ENCODE measurements at regions of chr1 and their contacts with region 1.

Region 1: DNA sequence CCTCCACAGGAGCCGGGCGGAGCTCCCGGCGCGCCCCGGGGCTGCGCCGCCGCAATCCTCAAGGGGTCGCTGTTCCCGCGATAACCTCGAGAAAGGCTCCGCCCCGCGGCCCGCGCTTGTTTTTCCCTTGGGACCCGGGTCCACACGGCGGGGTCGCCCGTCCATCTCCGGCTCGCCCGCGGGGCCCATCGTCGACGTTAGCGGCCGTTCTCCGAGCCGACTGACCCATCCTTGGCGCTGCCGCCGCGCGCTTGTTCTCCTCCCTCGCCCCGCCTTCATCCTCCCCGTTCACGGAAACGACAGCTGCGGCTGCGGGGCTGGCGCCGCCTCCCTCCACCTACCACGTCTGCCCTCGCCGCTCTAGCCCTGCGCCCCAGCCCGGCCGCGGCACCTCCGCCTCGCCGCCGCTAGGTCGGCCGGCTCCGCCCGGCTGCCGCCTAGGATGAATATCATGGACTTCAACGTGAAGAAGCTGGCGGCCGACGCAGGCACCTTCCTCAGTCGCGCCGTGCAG is at the start of gene SH3GLB1:
- DNase-seq: peak; percentile 93
- H3K4me3 ChIP-seq: peak within 1 kb of the TSS; percentile 82
- H3K27ac ChIP-seq: peak within 1 kb of the TSS; percentile 89
- H3K4me1 ChIP-seq: peaks cover 30% of the 10 kb centered on the region
- CTCF ChIP-seq: peak; percentile 90
- total RNA-seq, gene SH3GLB1: 17.7 and 18.9 TPM in 2 replicates

Region 2: GRCh38 chr1:86380257-86380861 is 324.2 kb before region 1 on chr1:
- CTCF ChIA-PET with region 1: no interaction called
- POLR2A ChIA-PET with region 1: no interaction called
- intact Hi-C with region 1: loop called (anchors 5 kb)
- DNase-seq: peak; percentile 69
- H3K4me3 ChIP-seq: no peak overlapping the region
- H3K27ac ChIP-seq: no peak overlapping the region
- H3K4me1 ChIP-seq: no peaks in the 10 kb centered on the region
- CTCF ChIP-seq: peak; percentile 95

Region 3: DNA sequence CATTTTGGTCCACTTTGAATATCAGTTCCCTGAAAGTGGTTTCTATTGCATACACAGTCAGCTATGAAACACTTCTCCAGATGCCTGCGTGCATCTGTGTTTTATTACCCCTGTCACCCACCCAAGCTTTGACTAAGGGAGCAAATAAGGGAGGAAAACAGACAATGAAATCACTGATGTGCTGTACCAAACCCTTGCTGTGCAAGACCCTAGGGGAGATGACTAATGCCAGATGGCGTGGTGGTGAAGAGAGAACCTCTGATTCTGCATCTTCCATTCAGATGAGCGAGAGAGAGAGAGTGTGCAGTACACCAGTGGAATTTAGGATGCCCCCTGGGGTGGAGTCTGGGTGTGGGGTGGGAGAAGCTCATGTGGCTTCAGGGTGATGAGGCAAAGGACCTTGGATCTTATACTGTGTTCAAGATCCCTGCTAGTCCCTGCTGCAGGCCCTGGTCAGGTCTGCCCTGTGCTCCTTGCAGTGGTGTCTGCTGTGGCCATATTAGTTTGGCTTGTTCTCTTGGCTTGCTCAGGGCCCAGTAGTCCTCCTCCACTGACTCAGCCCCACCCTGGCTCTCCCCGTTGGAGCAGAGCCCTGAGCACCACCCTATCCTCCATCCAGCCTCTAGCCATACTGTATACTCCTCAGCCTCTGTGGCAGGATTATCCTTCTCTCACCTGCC is 217.2 kb before region 1 on chr1:
- CTCF ChIA-PET with region 1: no interaction called
- POLR2A ChIA-PET with region 1: no interaction called
- intact Hi-C with region 1: no loop called
- DNase-seq: no peak
- H3K4me3 ChIP-seq: no peak overlapping the region
- H3K27ac ChIP-seq: no peak overlapping the region
- H3K4me1 ChIP-seq: no peaks in the 10 kb centered on the region
- CTCF ChIP-seq: no peak

Region 4: DNA sequence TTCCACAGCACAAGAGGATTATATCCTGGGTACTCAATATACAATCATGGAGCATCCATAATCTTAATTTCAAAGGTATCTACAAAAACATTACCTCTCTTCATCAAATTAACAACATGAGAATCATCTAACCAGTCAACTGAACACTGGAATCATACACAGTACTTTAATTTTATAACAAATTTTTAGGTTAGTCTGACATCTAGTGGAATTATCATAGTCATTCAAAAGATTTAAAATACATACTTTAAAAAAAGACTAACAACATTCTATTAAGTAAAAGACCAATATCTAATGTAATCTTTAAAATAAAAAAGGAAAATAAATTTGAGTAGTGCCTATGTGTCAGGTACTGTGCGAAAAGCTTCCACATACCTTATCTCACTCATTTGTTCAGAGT is 16.9 kb before region 1 on chr1:
- CTCF ChIA-PET with region 1: no interaction called
- POLR2A ChIA-PET with region 1: no interaction called
- intact Hi-C with region 1: no loop called
- DNase-seq: peak; percentile 25
- H3K4me3 ChIP-seq: no peak overlapping the region
- H3K27ac ChIP-seq: no peak overlapping the region
- H3K4me1 ChIP-seq: no peaks in the 10 kb centered on the region
- CTCF ChIP-seq: peak; percentile 72

Region 5: GRCh38 chr1:86733340-86733739 is 28.8 kb after region 1 on chr1:
- CTCF ChIA-PET with region 1: interaction called, 3 read pairs
- POLR2A ChIA-PET with region 1: interaction called, 11 read pairs
- intact Hi-C with region 1: no loop called
- DNase-seq: no peak
- H3K4me3 ChIP-seq: no peak overlapping the region
- H3K27ac ChIP-seq: no peak overlapping the region
- H3K4me1 ChIP-seq: no peaks in the 10 kb centered on the region
- CTCF ChIP-seq: no peak

Region 6: DNA sequence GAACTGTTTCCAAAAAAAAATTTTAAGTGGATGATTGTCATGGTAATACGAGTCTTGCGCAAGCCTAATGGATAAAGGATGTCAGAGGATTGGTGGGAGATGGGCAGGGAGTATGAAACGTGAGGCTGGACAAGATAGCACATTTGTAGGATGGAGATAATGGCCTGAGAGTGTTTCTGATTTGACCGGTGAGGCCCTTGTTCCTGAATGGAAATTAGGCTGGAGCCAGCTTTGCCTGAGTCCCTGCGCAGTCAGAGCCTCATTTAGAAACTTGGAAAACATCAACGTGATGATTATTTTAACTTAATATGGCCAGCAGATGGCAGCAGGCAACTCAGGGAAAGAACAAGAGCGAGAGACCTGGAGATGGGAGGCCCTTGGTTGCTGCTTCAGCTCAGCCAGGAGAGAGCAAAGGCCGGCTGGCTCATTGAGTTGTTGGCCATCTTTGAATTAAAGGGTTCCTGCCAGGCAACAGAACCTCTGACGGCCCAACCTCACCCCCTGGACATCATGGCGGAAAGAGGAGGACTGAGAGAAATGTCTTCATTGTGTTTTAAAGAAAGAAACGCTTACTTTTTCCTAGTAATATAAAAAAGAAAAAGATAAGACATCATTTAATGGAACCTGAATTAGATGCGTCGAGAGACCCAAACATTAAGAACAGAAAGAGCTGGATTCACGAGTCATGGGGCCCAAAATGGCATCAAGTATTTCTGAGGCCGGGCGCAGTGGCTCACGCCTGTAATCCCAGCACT is 129.1 kb after region 1 on chr1:
- CTCF ChIA-PET with region 1: no interaction called
- POLR2A ChIA-PET with region 1: interaction called, 5 read pairs
- intact Hi-C with region 1: loop called (anchors 1 kb)
- DNase-seq: peak; percentile 92
- H3K4me3 ChIP-seq: peak overlapping the region; percentile 73
- H3K27ac ChIP-seq: peak overlapping the region; percentile 66
- H3K4me1 ChIP-seq: peaks cover 35% of the 10 kb centered on the region
- CTCF ChIP-seq: peak; percentile 87

Region 7: DNA sequence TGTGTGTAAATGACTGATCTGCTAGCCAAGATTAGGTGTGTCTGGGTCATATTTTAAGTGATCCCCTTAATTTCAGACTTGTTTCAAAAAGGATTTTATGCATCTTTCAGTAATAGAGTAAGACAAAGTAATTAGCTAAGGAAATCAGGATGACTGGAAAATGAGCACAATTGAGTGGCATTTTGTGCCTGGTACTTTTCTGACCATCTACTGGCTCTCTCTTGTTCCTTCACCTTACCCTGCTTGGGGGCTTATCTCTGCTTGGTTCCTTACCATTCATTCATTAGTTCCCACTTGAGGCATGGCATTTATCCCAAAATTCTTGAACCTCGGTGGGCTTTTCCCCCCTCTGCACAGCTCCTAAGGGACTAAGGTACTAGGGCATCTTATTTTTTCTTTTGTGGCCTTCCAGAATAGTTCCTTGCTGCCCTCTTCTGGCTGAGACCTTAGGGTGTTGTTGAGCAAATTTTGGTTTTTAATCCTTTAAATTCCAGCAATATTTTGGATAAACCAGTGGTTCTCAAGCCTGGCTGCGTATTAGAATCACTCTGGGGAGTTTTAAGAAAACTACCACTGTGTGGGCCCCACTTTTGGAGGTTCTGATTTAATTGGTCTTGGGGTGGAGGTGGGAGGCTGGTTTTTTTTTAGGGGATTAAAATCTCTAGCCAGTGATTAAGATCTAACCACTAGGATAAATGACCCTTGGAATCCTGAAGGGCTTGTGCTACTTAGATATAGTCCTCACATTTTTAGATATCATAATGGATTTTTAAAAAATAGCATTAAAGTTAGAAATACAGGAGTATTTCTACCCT is 260.7 kb after region 1 on chr1:
- CTCF ChIA-PET with region 1: no interaction called
- POLR2A ChIA-PET with region 1: no interaction called
- intact Hi-C with region 1: loop called (anchors 5 kb)
- DNase-seq: peak; percentile 52
- H3K4me3 ChIP-seq: no peak overlapping the region
- H3K27ac ChIP-seq: peak overlapping the region; percentile 16
- H3K4me1 ChIP-seq: peaks cover 17% of the 10 kb centered on the region
- CTCF ChIP-seq: peak; percentile 88

Region 8: DNA sequence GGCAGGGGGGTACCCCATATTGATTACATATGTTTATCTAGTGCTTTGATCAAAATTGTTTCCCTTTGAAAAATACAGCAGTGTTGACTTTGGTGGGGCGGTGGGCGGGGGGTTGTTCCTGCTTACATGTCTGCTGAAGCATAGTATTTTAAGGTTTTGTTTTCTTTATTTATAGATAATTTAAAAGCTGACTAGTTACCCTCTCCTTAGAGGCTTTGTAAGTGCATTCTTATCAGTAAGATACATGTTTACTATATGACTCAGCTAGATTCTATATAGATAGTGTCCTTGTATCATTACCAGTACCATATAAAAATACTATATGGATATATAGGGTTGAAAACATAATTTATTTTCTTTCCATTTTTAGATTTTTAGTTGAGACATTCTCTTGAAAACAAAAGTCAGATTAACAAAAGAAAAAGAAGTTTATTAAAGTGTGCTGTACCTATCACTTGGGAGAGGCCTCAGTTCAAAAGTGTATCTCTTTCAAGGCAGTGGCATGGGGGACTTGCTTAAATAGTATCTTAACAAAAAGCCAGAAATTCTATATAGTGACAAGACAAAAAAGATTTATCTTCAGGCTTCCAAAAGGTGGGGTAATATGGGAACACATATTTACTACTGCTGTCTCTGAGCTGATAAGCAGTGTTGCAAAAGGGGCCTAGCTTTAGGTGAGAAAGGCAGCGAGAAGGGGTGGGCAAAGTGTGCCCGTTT is 288.9 kb after region 1 on chr1:
- CTCF ChIA-PET with region 1: no interaction called
- POLR2A ChIA-PET with region 1: no interaction called
- intact Hi-C with region 1: no loop called
- DNase-seq: no peak
- H3K4me3 ChIP-seq: no peak overlapping the region
- H3K27ac ChIP-seq: no peak overlapping the region
- H3K4me1 ChIP-seq: peaks cover 4% of the 10 kb centered on the region
- CTCF ChIP-seq: no peak

Region 9: GRCh38 chr1:87328272-87329050 is 623.9 kb after region 1 on chr1 and contains the start of gene LMO4:
- CTCF ChIA-PET with region 1: no interaction called
- POLR2A ChIA-PET with region 1: no interaction called
- intact Hi-C with region 1: loop called (anchors 10 kb)
- DNase-seq: peak; percentile 96
- H3K4me3 ChIP-seq: peak within 1 kb of the TSS; percentile 75
- H3K27ac ChIP-seq: peak within 1 kb of the TSS; percentile 65
- H3K4me1 ChIP-seq: peaks cover 30% of the 10 kb centered on the region
- CTCF ChIP-seq: no peak
- total RNA-seq, gene LMO4: 14.5 and 19.9 TPM in 2 replicates